H1 (cell line): ENCODE measurements at regions of chr5 and their contacts with region 1.

Region 1: DNA sequence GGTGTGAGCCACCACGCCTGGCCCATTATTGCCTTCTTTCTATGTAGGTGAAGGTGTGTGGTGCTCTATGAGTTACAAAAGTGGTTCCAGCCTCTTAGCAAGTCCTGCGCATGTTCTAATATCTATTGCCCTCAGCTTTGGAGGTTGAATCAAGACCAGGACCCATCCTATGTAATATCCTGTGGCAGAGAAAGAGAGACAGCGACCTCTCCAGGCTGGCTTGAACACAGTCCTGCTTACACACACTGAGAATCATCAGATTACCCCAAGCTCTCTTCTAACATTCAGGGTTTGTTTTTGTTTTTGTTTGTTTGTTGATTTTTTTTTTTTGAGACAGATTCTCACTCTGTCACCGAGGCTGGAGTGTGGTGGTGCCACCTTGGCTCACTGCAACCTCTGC is 94.7 kb upstream of the OSMR start:
- DNase-seq: no peak
- H3K4me3 ChIP-seq: no peak overlapping the region
- H3K27ac ChIP-seq: no peak overlapping the region
- H3K4me1 ChIP-seq: no peaks in the 10 kb centered on the region
- H3K27me3 ChIP-seq: no peaks in the 10 kb centered on the region
- CTCF ChIP-seq: peak; percentile 5 to 66 (median 53)
- EP300 ChIP-seq: no peak
- POLR2A ChIP-seq: no peak
- RAD21 ChIP-seq: peak; percentile 65 to 75

Region 2: GRCh38 chr5:38672059-38672788 is 78.9 kb before region 1 on chr5:
- CTCF ChIA-PET with region 1: interaction called, 13 read pairs
- POLR2A ChIA-PET with region 1: no interaction called
- DNase-seq: no peak
- H3K4me3 ChIP-seq: no peak overlapping the region
- H3K27ac ChIP-seq: no peak overlapping the region
- H3K4me1 ChIP-seq: no peaks in the 10 kb centered on the region
- H3K27me3 ChIP-seq: no peaks in the 10 kb centered on the region
- CTCF ChIP-seq: no peak
- EP300 ChIP-seq: no peak
- POLR2A ChIP-seq: no peak
- RAD21 ChIP-seq: no peak

Region 3: DNA sequence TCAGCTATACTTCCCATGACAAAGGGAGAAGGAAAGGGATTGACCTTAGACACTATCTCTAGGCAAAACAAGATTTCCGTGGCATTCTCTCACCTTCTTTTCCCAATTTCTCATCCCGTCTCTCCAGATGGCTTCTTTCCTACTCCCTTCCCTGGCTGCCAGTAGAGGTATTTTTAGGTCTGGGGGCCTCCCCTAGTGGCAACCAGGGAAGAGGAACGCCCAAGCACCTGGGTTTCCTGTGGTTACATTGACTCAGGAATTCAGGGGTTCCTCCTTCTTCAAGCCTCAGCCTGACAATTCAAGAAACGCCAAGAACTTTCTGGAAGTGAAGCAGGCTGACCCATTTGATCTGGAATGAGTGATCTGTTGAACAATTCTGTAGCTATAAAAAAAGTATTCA is 16.8 kb before region 1 on chr5:
- CTCF ChIA-PET with region 1: interaction called, 18 read pairs
- POLR2A ChIA-PET with region 1: no interaction called
- DNase-seq: peak in 1 of 2 experiments; percentile 43
- H3K4me3 ChIP-seq: no peak overlapping the region
- H3K27ac ChIP-seq: no peak overlapping the region
- H3K4me1 ChIP-seq: no peaks in the 10 kb centered on the region
- H3K27me3 ChIP-seq: no peaks in the 10 kb centered on the region
- CTCF ChIP-seq: peak; percentile 58 to 76 (median 75)
- EP300 ChIP-seq: no peak; a peak in 1 of 3 replicates
- POLR2A ChIP-seq: no peak
- RAD21 ChIP-seq: peak; percentile 83 to 86

Region 4: GRCh38 chr5:38938424-38938823 is 187.3 kb after region 1 on chr5:
- CTCF ChIA-PET with region 1: no interaction called
- POLR2A ChIA-PET with region 1: no interaction called
- DNase-seq: no peak
- H3K4me3 ChIP-seq: no peak overlapping the region
- H3K27ac ChIP-seq: no peak overlapping the region
- H3K4me1 ChIP-seq: no peaks in the 10 kb centered on the region
- H3K27me3 ChIP-seq: no peaks in the 10 kb centered on the region
- CTCF ChIP-seq: no peak
- EP300 ChIP-seq: no peak
- POLR2A ChIP-seq: no peak
- RAD21 ChIP-seq: no peak